ENCODE measurements at regions of chr11 and their contacts with region 1.

Region 1: DNA sequence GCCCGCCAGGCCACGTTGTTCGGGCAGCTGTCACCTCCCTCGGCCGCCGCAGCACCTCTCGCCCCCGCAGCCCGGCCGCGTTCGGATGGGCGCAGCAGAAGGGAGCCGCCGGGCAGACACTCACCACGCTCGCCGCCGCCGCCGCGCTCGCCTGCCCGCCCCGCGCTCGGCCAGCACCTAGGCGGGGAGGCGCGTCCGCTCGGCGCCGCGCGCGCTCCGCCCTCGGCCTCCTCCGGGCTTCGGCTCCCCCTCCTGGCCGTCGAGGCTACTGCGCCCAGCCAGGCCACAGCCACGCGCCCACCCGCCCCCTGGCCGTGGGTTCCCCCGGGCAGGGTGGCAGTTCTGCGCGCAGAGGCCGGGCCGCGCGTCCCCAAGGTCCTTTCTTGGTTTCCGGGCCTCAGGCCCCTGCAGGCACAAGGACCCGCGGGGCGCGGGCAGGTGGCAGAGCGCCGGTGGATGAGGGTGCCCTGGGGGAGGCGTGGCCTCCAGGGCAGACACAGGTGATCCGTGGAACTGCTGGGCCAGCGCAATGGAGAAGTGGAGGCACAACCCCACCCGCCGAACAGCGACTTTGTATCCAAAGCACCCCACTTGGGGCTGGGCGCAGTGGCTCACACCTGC is at the start of gene SLC25A22:
- DNase-seq: peak; percentile 80 to 90 (median 85)
- H3K4me3 ChIP-seq: peak within 1 kb of the TSS; percentile 73 to 91
- H3K4me3 Mint-ChIP-seq: peak within 1 kb of the TSS; percentile 86 to 97 (median 91)
- H3K27ac ChIP-seq: peak within 1 kb of the TSS; percentile 86
- H3K27ac Mint-ChIP-seq: peak within 1 kb of the TSS; percentile 93 to 96 (median 94)
- H3K4me1 ChIP-seq: peaks cover 32% of the 10 kb centered on the region
- H3K4me1 Mint-ChIP-seq: peaks cover 5 to 19% (median 10%) of the 10 kb centered on the region in 4 donors
- H3K27me3 ChIP-seq: no peaks in the 10 kb centered on the region
- H3K27me3 Mint-ChIP-seq: no peaks in the 10 kb centered on the region
- total RNA-seq, gene SLC25A22: 24.0 to 24.1 TPM

Region 2: DNA sequence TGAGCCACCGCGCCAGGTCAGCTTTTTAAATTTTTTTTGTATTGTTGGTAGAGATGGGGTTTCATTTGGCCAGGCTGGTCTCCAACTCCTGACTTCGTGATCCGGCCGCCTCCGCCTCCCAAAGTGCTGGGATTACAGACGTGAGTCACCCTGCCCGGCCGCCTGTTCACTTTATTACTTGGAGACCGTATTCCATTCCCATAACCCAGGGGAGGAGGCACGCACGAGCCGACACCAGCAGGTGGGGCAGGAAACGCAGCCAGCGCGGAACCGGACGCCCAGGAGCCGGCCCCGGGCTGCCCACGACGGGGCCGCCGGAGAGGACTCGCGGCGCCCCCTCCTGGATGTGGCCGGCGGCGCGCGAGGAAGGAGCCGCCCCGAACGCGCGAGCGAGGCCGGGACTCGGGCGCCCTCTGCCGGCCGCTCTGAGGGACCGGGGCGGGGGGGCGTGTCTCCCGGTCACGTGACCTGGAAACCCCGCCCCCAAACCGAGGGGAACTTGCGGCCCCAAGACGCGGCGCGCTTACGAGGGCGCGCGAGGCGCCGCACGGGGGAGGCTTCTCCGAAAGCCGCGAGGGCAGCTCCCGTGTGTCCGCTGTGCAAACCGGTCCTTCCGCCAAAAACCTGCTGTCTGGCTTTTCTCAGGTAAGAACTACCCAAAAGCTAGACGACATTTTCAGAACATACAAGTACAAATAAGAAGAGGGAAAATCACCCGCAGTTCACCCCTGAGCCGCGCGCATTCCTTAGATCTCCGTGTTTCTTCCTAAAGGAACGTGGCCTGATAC is 279.5 kb before region 1 on chr11:
- CTCF ChIA-PET with region 1: no interaction called
- POLR2A ChIA-PET with region 1: no interaction called
- intact Hi-C with region 1: no loop called
- DNase-seq: peak; percentile 82 to 91 (median 84)
- H3K4me3 ChIP-seq: peak overlapping the region in 1 of 2 donors; percentile 30
- H3K4me3 Mint-ChIP-seq: peak overlapping the region; percentile 20 to 91 (median 84)
- H3K27ac ChIP-seq: no peak overlapping the region
- H3K27ac Mint-ChIP-seq: peak overlapping the region; percentile 80 to 92 (median 88)
- H3K4me1 ChIP-seq: peaks cover 4% of the 10 kb centered on the region
- H3K4me1 Mint-ChIP-seq: peaks cover 2 to 12% (median 3%) of the 10 kb centered on the region in 4 donors
- H3K27me3 ChIP-seq: no peaks in the 10 kb centered on the region
- H3K27me3 Mint-ChIP-seq: no peaks in the 10 kb centered on the region

Region 3: GRCh38 chr11:597166-597725 is 201.0 kb before region 1 on chr11:
- CTCF ChIA-PET with region 1: no interaction called
- POLR2A ChIA-PET with region 1: no interaction called
- intact Hi-C with region 1: no loop called
- DNase-seq: peak in 1 of 5 donors; percentile 21
- H3K4me3 ChIP-seq: no peak overlapping the region
- H3K4me3 Mint-ChIP-seq: no peak overlapping the region
- H3K27ac ChIP-seq: no peak overlapping the region
- H3K27ac Mint-ChIP-seq: peak overlapping the region in 3 of 7 donors; percentile 26 to 90 (median 80)
- H3K4me1 ChIP-seq: peaks cover 5% of the 10 kb centered on the region
- H3K4me1 Mint-ChIP-seq: peaks cover 8 to 13% (median 10%) of the 10 kb centered on the region in 4 donors
- H3K27me3 ChIP-seq: no peaks in the 10 kb centered on the region
- H3K27me3 Mint-ChIP-seq: no peaks in the 10 kb centered on the region

Region 4: DNA sequence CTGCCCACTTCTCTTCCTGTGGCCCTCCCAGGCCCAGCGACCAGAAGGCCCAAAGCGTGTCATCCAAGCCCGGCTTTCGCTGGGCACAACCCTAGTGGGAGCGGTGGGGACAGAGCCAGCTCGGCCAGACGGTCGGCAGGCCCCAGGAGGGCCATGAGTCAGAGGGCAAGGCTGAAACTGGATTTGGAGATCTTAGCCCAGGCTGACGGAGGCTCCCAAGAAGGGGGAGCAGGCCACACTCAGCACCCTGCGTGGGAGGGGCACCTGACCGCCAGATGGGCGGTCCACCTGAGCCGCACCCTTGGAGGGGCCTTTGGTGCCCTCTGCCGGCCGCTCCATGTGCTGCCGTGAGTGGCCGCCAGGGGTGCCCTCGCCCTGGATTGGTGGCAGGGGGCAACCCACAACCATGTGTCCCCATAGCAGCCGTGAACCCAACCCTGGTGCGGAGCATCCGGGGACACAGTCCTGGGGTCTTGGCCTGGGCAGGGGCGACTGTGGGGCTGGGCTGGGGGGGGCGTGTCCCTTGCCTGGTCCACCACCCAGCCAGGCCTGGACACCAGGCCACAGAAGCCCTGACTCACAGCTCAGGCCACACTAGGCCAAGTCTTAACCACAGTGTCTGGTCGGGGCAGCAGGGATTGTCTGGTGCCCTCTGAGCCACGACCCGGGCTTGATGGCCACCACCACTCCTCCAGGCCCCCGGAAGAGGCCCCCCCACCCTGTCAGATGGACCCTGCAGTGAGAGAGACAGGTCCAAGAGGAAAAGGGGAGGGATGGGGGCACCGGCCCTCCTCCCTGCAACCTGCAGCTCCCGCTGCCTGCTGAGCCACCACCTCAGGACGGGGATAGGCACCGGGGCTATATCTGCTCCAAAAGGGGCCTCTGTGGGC is 70.1 kb before region 1 on chr11:
- CTCF ChIA-PET with region 1: no interaction called
- POLR2A ChIA-PET with region 1: interaction called, 5 read pairs
- intact Hi-C with region 1: loop called (anchors 1 kb)
- DNase-seq: peak; percentile 71 to 78 (median 75)
- H3K4me3 ChIP-seq: no peak overlapping the region
- H3K4me3 Mint-ChIP-seq: no peak overlapping the region
- H3K27ac ChIP-seq: no peak overlapping the region
- H3K27ac Mint-ChIP-seq: no peak overlapping the region
- H3K4me1 ChIP-seq: peaks cover 26% of the 10 kb centered on the region
- H3K4me1 Mint-ChIP-seq: peaks cover 4 to 13% (median 9%) of the 10 kb centered on the region in 4 donors
- H3K27me3 ChIP-seq: no peaks in the 10 kb centered on the region
- H3K27me3 Mint-ChIP-seq: peaks cover 1 to 2% of the 10 kb centered on the region in 2 donors

Region 5: GRCh38 chr11:777288-778255 is 20.6 kb before region 1 on chr11 and contains the start of gene GATD1:
- CTCF ChIA-PET with region 1: interaction called, 9 read pairs
- POLR2A ChIA-PET with region 1: interaction called, 23 read pairs
- intact Hi-C with region 1: loop called (anchors 1 kb)
- DNase-seq: peak; percentile 89 to 95 (median 92)
- H3K4me3 ChIP-seq: peak within 1 kb of the TSS; percentile 29 to 76
- H3K4me3 Mint-ChIP-seq: peak within 1 kb of the TSS; percentile 77 to 89 (median 87)
- H3K27ac ChIP-seq: peak within 1 kb of the TSS; percentile 67
- H3K27ac Mint-ChIP-seq: peak within 1 kb of the TSS; percentile 68 to 93 (median 87)
- H3K4me1 ChIP-seq: peaks cover 32% of the 10 kb centered on the region
- H3K4me1 Mint-ChIP-seq: peaks cover 3 to 36% (median 9%) of the 10 kb centered on the region in 4 donors
- H3K27me3 ChIP-seq: no peaks in the 10 kb centered on the region
- H3K27me3 Mint-ChIP-seq: no peaks in the 10 kb centered on the region
- total RNA-seq, gene GATD1: 51.5 to 64.9 TPM

Region 6: GRCh38 chr11:809287-810039 is 11.3 kb after region 1 on chr11 and contains the start of gene RPLP2:
- CTCF ChIA-PET with region 1: interaction called, 4 read pairs
- POLR2A ChIA-PET with region 1: interaction called, 29 read pairs
- intact Hi-C with region 1: loop called (anchors 1 kb)
- DNase-seq: peak; percentile 97 to 99 (median 97)
- H3K4me3 ChIP-seq: peak within 1 kb of the TSS; percentile 53 to 100
- H3K4me3 Mint-ChIP-seq: peak within 1 kb of the TSS; percentile 91 to 98 (median 94)
- H3K27ac ChIP-seq: peak within 1 kb of the TSS; percentile 96
- H3K27ac Mint-ChIP-seq: peak within 1 kb of the TSS; percentile 98 to 100 (median 99)
- H3K4me1 ChIP-seq: peaks cover 35% of the 10 kb centered on the region
- H3K4me1 Mint-ChIP-seq: peaks cover 8 to 48% (median 29%) of the 10 kb centered on the region in 4 donors
- H3K27me3 ChIP-seq: no peaks in the 10 kb centered on the region
- H3K27me3 Mint-ChIP-seq: no peaks in the 10 kb centered on the region
- total RNA-seq, gene RPLP2: 4,870 to 5,155 TPM

Region 7: DNA sequence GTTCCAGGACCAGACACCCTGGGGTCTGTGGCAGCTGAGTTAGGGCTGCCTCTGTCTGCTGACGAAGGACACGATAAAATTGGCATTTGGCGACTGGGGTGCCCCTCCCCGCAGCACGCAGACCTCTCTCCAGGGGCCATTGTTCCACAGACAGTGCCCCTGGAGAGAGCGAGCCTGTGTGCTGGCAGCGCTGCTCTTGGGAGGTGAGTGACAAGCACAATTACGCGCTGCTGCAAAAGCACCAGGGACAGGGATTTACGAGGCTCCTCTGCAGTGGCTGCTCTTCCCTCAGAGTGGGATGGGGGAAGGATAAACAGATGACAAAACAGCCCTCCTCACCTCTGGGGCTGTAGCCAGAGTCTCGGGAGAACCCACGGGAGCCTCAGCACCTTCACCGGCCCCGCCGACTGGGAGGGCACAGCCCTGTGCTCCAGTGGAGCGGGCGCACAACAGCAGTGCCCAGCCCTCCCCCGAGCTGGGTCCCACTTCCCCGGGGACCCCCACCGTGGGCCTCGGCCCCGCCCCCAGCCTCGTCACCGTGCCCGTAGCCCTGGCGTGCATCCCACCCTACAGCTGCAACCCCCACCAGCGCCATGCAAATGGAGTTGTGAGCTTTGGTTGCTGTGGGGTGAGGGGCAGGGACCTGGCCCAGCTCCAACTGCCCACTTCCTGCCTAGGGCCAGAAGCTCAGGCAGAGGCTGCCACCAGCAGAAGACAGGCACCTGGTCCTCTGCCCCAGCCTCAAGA is 92.8 kb after region 1 on chr11:
- CTCF ChIA-PET with region 1: no interaction called
- POLR2A ChIA-PET with region 1: no interaction called
- intact Hi-C with region 1: no loop called
- DNase-seq: peak in 1 of 5 donors; percentile 15
- H3K4me3 ChIP-seq: no peak overlapping the region
- H3K4me3 Mint-ChIP-seq: no peak overlapping the region
- H3K27ac ChIP-seq: no peak overlapping the region
- H3K27ac Mint-ChIP-seq: no peak overlapping the region
- H3K4me1 ChIP-seq: no peaks in the 10 kb centered on the region
- H3K4me1 Mint-ChIP-seq: peaks cover 0 to 3% (median under 1%) of the 10 kb centered on the region in 4 donors
- H3K27me3 ChIP-seq: no peaks in the 10 kb centered on the region
- H3K27me3 Mint-ChIP-seq: no peaks in the 10 kb centered on the region

Region 8: GRCh38 chr11:925496-926321 is 127.5 kb after region 1 on chr11 and contains the start of gene AP2A2:
- CTCF ChIA-PET with region 1: no interaction called
- POLR2A ChIA-PET with region 1: no interaction called
- intact Hi-C with region 1: loop called (anchors 5 kb)
- DNase-seq: peak; percentile 80 to 94 (median 92)
- H3K4me3 ChIP-seq: peak within 1 kb of the TSS; percentile 52 to 63
- H3K4me3 Mint-ChIP-seq: peak within 1 kb of the TSS; percentile 87 to 90 (median 88)
- H3K27ac ChIP-seq: peak within 1 kb of the TSS; percentile 52
- H3K27ac Mint-ChIP-seq: peak within 1 kb of the TSS; percentile 82 to 94 (median 92)
- H3K4me1 ChIP-seq: peaks cover 39% of the 10 kb centered on the region
- H3K4me1 Mint-ChIP-seq: peaks cover 19 to 37% (median 30%) of the 10 kb centered on the region in 4 donors
- H3K27me3 ChIP-seq: no peaks in the 10 kb centered on the region
- H3K27me3 Mint-ChIP-seq: no peaks in the 10 kb centered on the region
- total RNA-seq, gene AP2A2: 81.7 to 87.4 TPM

Region 9: DNA sequence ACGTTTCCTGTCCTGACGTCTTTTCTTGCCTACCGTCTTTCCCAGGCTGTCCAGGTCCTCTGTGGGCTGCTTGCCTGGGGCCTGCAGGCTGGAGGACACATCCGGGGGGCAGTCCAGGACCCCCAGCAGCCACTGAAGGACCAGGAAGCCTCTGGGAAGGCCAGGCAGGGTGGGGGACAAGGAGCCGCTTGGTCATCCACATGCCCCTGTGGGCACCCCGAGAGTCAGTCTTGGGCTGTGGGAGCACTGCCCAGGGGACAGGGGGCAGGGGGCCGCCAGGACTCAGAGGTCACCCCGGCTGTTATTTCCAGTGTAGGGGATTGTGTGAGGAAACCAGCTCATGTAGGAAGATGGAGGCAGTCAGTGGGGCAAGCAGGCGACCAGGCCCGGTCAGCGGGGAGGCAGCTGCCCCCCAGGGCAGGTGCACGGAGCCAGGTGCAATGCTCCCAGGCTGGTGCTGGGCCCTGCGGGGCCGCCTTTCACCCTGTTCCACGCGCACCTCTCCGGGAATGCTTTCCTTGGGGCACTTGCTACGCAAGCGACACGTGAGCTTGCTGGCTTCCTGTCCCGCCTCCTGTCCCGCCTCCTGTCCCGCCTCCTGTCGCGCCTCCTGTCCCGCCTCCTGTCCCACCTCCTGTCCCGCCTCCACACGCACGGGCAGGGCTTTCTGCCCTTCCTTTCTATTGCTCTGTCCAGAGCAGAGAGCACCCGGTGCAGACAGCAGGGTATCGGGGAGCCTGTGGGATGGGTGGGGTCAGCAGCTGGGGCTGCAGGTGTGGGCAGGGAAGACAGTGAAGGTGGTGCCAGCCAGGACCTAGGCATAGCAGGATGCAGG is 464.2 kb after region 1 on chr11:
- CTCF ChIA-PET with region 1: no interaction called
- POLR2A ChIA-PET with region 1: no interaction called
- intact Hi-C with region 1: no loop called
- DNase-seq: peak; percentile 86 to 89 (median 87)
- H3K4me3 ChIP-seq: peak overlapping the region; percentile 65 to 71
- H3K4me3 Mint-ChIP-seq: peak overlapping the region; percentile 79 to 93 (median 86)
- H3K27ac ChIP-seq: peak overlapping the region; percentile 77
- H3K27ac Mint-ChIP-seq: peak overlapping the region; percentile 67 to 97 (median 92)
- H3K4me1 ChIP-seq: peaks cover 17% of the 10 kb centered on the region
- H3K4me1 Mint-ChIP-seq: peaks cover 7 to 23% (median 12%) of the 10 kb centered on the region in 4 donors
- H3K27me3 ChIP-seq: no peaks in the 10 kb centered on the region
- H3K27me3 Mint-ChIP-seq: no peaks in the 10 kb centered on the region